CD14-positive monocyte (primary cell): ENCODE measurements at regions of chr19 and their contacts with region 1.

Region 1: DNA sequence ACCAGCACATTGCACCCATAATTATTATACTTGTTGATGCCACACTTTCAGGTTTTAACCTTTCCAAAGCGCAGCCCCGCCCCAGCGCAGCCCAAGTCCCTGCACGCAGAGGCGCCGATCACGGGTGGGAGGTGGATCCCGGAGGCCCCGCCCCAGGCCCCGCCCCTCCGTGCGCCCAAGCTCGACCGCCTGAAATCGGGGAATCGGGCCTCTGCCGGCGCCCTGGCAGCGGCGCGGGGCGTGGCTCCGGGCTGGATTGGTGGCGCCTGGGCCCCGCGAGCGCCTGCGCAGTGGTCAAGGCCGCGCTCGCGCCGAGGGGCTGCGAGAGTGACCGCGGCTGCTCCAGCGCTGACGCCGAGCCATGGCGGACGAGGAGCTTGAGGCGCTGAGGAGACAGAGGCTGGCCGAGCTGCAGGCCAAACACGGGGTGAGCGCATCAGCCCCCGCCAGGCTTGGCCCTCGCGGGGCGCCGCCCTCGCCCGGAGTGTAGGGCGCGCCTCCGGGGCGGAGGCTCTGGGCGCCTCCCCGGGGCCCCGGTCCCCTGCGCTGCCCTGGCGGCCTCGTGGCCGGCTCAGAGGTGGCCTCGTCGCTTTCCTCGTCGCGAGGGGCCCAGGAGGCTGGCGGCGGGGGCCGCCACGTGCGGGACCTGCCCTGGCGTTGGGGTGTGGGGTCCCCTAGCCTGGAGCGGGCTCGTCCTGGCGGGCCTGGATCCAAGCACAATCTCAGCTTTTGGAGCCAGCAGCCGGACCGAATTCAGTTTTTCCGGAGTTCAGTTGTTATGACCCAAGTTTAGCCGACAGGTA is at the start of gene PDCD5:
- DNase-seq: peak; percentile 89 to 93 (median 93)
- H3K4me3 ChIP-seq: peak within 1 kb of the TSS; percentile 42 to 73 (median 52)
- H3K4me3 Mint-ChIP-seq: peak within 1 kb of the TSS; percentile 82 to 96
- H3K27ac ChIP-seq: peak within 1 kb of the TSS; percentile 13 to 81
- H3K27ac Mint-ChIP-seq: peak within 1 kb of the TSS; percentile 33 to 88 (median 80)
- H3K4me1 ChIP-seq: peaks cover 16 to 24% of the 10 kb centered on the region in 2 donors
- H3K4me1 Mint-ChIP-seq: peaks cover 17% of the 10 kb centered on the region
- H3K27me3 ChIP-seq: peaks cover 0 to 3% of the 10 kb centered on the region in 2 donors
- H3K27me3 Mint-ChIP-seq: peaks cover 9 to 15% (median 13%) of the 10 kb centered on the region in 3 donors
- CTCF ChIP-seq: no peak
- polyA plus RNA-seq, gene PDCD5: 41.4 to 84.5 (median 79.9) TPM

Region 2: DNA sequence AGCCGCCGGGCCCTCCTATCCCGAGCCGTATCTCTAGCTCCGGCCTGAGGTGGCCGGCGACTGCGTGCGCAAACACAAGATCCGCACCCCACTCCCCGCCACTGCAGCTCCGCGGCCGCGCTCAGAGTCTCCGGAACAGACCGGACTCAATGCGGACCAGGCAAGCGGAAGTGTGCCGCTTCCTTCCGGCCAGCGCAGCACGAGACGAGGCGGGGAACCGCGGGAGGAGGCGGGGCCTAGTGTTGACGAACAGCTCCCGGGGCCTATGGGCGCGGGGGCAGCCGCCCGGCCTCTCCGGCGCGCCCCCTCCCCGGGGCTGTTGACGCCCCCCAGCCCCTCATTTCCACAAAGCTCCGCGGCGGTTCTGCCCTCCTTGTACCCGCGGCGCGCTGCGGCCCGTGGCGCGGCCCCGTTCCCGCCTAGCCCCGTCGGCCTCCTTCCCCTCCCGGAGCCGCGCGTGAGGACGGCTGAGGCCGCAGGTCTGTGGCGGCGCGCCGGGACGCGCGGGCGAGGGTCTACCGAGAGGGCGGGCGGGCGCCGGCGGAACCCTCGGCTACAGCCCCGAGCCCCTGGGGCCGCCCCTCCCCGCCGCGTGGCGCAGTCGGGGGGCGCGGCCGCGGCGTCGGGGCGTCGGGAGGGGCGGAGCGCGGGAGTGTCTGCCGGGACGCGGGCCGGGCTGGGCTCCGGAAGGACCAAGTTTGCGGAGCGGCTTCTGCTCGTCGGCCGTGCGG is 175.5 kb before region 1 on chr19 and contains the start of gene DPY19L3:
- intact Hi-C with region 1: loop called in 1 of 2 experiments (anchors 10 kb)
- DNase-seq: peak; percentile 92 to 93 (median 92)
- H3K4me3 ChIP-seq: peak within 1 kb of the TSS; percentile 59 to 77 (median 70)
- H3K4me3 Mint-ChIP-seq: peak within 1 kb of the TSS; percentile 80 to 88
- H3K27ac ChIP-seq: peak within 1 kb of the TSS; percentile 85 to 90
- H3K27ac Mint-ChIP-seq: peak within 1 kb of the TSS; percentile 79 to 92 (median 90)
- H3K4me1 ChIP-seq: peaks cover 26 to 33% of the 10 kb centered on the region in 2 donors
- H3K4me1 Mint-ChIP-seq: peaks cover 30% of the 10 kb centered on the region
- H3K27me3 ChIP-seq: peaks cover 8 to 18% of the 10 kb centered on the region in 2 donors
- H3K27me3 Mint-ChIP-seq: peaks cover 25 to 28% (median 26%) of the 10 kb centered on the region in 3 donors
- CTCF ChIP-seq: no peak
- polyA plus RNA-seq, gene DPY19L3: 6.5 to 13.8 (median 7.7) TPM

Region 3: DNA sequence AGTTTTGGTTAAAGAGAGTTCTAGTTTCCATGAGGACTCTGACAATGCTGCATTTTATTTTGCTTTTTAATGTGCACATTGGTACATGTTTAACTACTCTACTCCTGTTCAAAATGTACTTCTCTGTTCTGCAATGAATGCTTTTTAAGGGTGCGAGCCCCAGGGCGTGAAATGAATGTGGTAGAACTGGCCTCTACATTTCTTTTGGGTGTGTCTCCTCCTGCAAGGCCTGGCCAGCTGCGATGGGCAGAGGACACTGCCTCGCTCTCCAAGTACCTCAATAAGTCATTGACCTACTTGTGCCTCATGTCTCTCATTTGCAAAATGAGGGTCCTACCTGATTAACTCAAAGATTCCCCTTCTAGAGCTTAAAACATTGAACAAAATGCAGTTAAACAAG is 101.2 kb after region 1 on chr19:
- intact Hi-C with region 1: loop called in 1 of 2 experiments (anchors 5 kb)
- DNase-seq: no peak
- H3K4me3 ChIP-seq: no peak overlapping the region
- H3K4me3 Mint-ChIP-seq: no peak overlapping the region
- H3K27ac ChIP-seq: no peak overlapping the region
- H3K27ac Mint-ChIP-seq: no peak overlapping the region
- H3K4me1 ChIP-seq: no peaks in the 10 kb centered on the region
- H3K4me1 Mint-ChIP-seq: peaks cover 4% of the 10 kb centered on the region
- H3K27me3 ChIP-seq: peaks cover 14% of the 10 kb centered on the region in 2 donors
- H3K27me3 Mint-ChIP-seq: peaks cover 18 to 24% (median 23%) of the 10 kb centered on the region in 3 donors
- CTCF ChIP-seq: no peak

Region 4: GRCh38 chr19:33186431-33187182 is 605.5 kb after region 1 on chr19:
- intact Hi-C with region 1: loop called in 1 of 2 experiments (anchors 10 kb)
- DNase-seq: peak; percentile 29 to 75 (median 68)
- H3K4me3 ChIP-seq: peak overlapping the region in 2 of 3 experiments; percentile 17 to 74
- H3K4me3 Mint-ChIP-seq: peak overlapping the region; percentile 60 to 80
- H3K27ac ChIP-seq: peak overlapping the region; percentile 44 to 70
- H3K27ac Mint-ChIP-seq: peak overlapping the region; percentile 50 to 89 (median 83)
- H3K4me1 ChIP-seq: peaks cover 45 to 48% of the 10 kb centered on the region in 2 donors
- H3K4me1 Mint-ChIP-seq: peaks cover 51% of the 10 kb centered on the region
- H3K27me3 ChIP-seq: no peaks in the 10 kb centered on the region
- H3K27me3 Mint-ChIP-seq: no peaks in the 10 kb centered on the region
- CTCF ChIP-seq: no peak